ENCODE measurements at regions of chr2 and their contacts with region 1.

Region 1: GRCh38 chr2:234544659-234545611 is 48.1 kb upstream of the ARL4C start:
- DNase-seq: peak; percentile 38
- ATAC-seq: peak; percentile 96
- H3K4me3 ChIP-seq: no peak overlapping the region
- H3K27ac ChIP-seq: no peak overlapping the region
- H3K4me1 ChIP-seq: peaks cover 3 to 8% of the 10 kb centered on the region in 2 experiments; a peak in 2 of 4 replicates
- H3K27me3 ChIP-seq: no peaks in the 10 kb centered on the region
- CTCF ChIP-seq: peak; percentile 84 to 85 (median 85)
- POLR2A ChIP-seq: no peak
- RAD21 ChIP-seq: peak; percentile 90

Region 2: GRCh38 chr2:234500394-234501006 is 44.4 kb before region 1 on chr2:
- CTCF ChIA-PET with region 1: interaction called, 10 read pairs
- POLR2A ChIA-PET with region 1: no interaction called
- RAD21 ChIA-PET with region 1: no interaction called
- intact Hi-C with region 1: no loop called
- DNase-seq: peak; percentile 49
- ATAC-seq: peak; percentile 60
- H3K4me3 ChIP-seq: no peak overlapping the region
- H3K27ac ChIP-seq: no peak overlapping the region
- H3K4me1 ChIP-seq: peaks cover 24 to 29% of the 10 kb centered on the region in 2 experiments
- H3K27me3 ChIP-seq: no peaks in the 10 kb centered on the region
- CTCF ChIP-seq: peak; percentile 42 to 82 (median 69); a peak in 5 of 6 replicates
- POLR2A ChIP-seq: no peak
- RAD21 ChIP-seq: peak; percentile 94

Region 3: GRCh38 chr2:235017441-235017840 is 472.5 kb after region 1 on chr2:
- CTCF ChIA-PET with region 1: no interaction called
- POLR2A ChIA-PET with region 1: no interaction called
- RAD21 ChIA-PET with region 1: no interaction called
- intact Hi-C with region 1: no loop called
- DNase-seq: no peak
- ATAC-seq: no peak
- H3K4me3 ChIP-seq: no peak overlapping the region
- H3K27ac ChIP-seq: no peak overlapping the region
- H3K4me1 ChIP-seq: peaks cover 13 to 38% of the 10 kb centered on the region in 2 experiments
- H3K27me3 ChIP-seq: no peaks in the 10 kb centered on the region
- CTCF ChIP-seq: no peak
- POLR2A ChIP-seq: no peak
- RAD21 ChIP-seq: no peak